ENCODE measurements at regions of chr11 and their contacts with region 1.

Region 1: GRCh38 chr11:74255741-74256369 is 55.6 kb downstream of the P4HA3 start:
- DNase-seq: no peak
- H3K4me3 ChIP-seq: no peak overlapping the region
- H3K27ac ChIP-seq: no peak overlapping the region
- H3K4me1 ChIP-seq: no peaks in the 10 kb centered on the region
- H3K27me3 ChIP-seq: no peaks in the 10 kb centered on the region
- CTCF ChIP-seq: peak; percentile 89 to 95 (median 92)

Region 2: DNA sequence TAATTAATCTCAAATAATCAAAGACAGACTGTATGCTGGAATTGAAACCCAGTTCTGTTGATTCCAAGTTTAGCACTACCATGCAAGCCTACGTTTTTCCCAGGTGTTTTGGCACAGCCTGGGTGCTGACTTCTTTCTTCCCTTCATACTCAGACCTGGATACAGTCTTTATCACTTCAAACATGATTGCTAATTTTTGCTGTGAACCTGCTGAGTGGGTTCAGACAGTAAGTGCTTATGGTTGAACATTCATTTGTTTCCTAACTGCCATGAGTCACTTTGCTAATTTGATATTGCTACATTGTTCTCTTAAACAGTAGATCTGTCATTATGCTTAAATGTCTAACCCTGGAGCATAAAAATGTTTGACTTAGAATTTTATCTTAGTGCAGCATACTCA is 366.8 kb before region 1 on chr11:
- dilution Hi-C with region 1: no loop called
- DNase-seq: no peak
- H3K4me3 ChIP-seq: no peak overlapping the region
- H3K27ac ChIP-seq: no peak overlapping the region
- H3K4me1 ChIP-seq: no peaks in the 10 kb centered on the region
- H3K27me3 ChIP-seq: no peaks in the 10 kb centered on the region
- CTCF ChIP-seq: no peak

Region 3: DNA sequence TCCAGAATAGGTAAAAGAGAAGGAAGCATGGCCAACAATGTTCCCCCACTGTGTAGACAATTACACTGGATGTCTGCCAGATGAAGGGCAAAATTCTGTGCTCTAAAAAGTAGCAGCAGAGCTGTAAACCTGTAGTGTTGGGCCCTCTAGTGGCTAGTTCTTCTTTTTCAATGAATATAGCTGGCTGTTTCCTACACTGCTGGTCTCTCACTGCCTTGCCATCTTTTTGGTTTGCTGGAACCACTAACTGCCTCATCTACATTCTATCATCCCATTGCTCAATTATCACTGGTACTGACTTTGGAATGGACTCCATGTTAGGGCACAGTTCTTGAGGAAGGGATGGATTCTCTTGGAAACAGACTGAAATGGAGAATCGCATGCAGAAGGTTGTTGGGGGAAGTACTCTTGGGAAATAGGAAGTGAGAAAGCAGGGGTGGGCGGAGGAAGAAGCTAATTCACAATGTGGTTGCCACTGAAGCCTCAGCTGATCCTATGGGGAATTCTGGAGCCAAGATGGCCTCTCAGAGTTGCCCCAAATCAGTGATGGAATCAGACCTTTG is 193.6 kb after region 1 on chr11:
- dilution Hi-C with region 1: loop called (anchors 25 kb)
- DNase-seq: peak; percentile 23
- H3K4me3 ChIP-seq: no peak overlapping the region
- H3K27ac ChIP-seq: no peak overlapping the region
- H3K4me1 ChIP-seq: no peaks in the 10 kb centered on the region
- H3K27me3 ChIP-seq: peaks cover 6% of the 10 kb centered on the region
- CTCF ChIP-seq: peak; percentile 66 to 82 (median 67)

Region 4: DNA sequence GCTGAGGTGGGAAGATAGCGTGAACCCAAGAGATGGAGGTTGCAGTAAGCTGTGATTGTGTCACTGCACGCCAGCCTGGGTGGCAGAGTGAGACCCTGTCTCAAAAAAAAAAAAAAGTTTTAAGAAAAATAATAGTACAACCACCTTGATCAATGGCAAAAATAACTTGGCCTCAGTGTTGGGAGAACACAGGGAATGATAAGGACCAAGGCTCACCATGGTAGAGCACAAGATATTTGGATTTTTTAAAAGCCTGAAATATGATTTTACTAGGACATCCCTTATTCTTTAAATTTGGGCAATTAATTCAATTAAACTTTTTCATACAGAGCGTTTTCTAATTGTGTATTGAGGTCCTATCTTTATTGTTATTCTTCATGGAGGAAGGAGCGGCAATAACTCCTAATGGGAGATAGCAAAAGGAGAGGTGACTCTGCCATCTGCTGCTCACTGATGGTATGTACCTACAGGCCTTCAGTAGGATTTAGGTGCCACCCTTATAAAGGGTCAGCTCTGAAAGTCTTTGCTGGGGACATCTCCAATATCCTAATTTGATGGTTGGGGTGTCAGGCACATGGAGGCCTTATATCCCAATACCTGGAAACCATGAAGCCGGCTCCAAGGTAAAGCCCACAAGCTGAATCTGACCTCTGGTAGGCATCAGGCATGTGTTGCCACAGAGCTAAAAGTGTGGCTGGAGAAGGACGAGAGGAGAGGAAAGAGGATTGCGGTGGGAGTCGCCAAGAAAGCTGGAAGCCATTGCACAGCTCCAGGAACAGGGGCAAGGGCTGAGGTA is 314.6 kb after region 1 on chr11:
- dilution Hi-C with region 1: loop called (anchors 25 kb)
- DNase-seq: no peak
- H3K4me3 ChIP-seq: no peak overlapping the region
- H3K27ac ChIP-seq: no peak overlapping the region
- H3K4me1 ChIP-seq: no peaks in the 10 kb centered on the region
- H3K27me3 ChIP-seq: no peaks in the 10 kb centered on the region
- CTCF ChIP-seq: peak; percentile 73 to 92 (median 80)